Activated CD8-positive, alpha-beta memory T cell treated with anti-CD3 and anti-CD28 coated beads, Interleukin-2, amount 10 ng/mL, durations not matched to agents 7 days and 5 days (primary cell): ENCODE measurements at regions of chr1 and their contacts with region 1.

Region 1: GRCh38 chr1:224644553-224645154 is 28.5 kb downstream of the CNIH3 start:
- DNase-seq: peak; percentile 70
- ATAC-seq: peak; percentile 79
- H3K4me3 Mint-ChIP-seq: no peak overlapping the region
- H3K27ac Mint-ChIP-seq: no peak overlapping the region
- H3K4me1 Mint-ChIP-seq: peaks cover 7% of the 10 kb centered on the region
- H3K27me3 Mint-ChIP-seq: peaks cover 9% of the 10 kb centered on the region

Region 2: GRCh38 chr1:224427346-224427745 is 217.3 kb before region 1 on chr1:
- CTCF ChIA-PET with region 1: no interaction called
- DNase-seq: no peak
- ATAC-seq: no peak
- H3K4me3 Mint-ChIP-seq: no peak overlapping the region
- H3K27ac Mint-ChIP-seq: no peak overlapping the region
- H3K4me1 Mint-ChIP-seq: peaks cover 50% of the 10 kb centered on the region
- H3K27me3 Mint-ChIP-seq: no peaks in the 10 kb centered on the region

Region 3: DNA sequence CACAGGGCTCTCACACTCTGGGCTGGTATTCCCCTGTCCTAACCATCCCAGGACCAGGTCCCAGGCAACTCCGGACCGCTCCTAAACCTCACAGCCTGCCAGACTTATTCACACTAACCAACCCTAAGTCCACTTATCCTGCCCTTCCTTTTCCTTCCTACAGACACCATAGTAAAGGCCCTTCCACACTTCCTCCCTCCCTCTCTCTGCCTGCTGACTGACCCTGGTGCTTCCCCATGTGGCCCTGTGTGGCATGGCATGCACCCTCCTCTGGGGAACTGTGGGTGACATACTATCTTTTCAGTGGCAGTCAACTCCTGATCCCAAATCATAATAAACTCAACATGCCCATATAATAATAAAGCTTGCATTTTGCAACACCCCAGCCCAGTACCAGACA is 129.7 kb after region 1 on chr1:
- CTCF ChIA-PET with region 1: no interaction called
- DNase-seq: no peak
- ATAC-seq: peak; percentile 39
- H3K4me3 Mint-ChIP-seq: no peak overlapping the region
- H3K27ac Mint-ChIP-seq: no peak overlapping the region
- H3K4me1 Mint-ChIP-seq: no peaks in the 10 kb centered on the region
- H3K27me3 Mint-ChIP-seq: peaks cover 12% of the 10 kb centered on the region

Region 4: DNA sequence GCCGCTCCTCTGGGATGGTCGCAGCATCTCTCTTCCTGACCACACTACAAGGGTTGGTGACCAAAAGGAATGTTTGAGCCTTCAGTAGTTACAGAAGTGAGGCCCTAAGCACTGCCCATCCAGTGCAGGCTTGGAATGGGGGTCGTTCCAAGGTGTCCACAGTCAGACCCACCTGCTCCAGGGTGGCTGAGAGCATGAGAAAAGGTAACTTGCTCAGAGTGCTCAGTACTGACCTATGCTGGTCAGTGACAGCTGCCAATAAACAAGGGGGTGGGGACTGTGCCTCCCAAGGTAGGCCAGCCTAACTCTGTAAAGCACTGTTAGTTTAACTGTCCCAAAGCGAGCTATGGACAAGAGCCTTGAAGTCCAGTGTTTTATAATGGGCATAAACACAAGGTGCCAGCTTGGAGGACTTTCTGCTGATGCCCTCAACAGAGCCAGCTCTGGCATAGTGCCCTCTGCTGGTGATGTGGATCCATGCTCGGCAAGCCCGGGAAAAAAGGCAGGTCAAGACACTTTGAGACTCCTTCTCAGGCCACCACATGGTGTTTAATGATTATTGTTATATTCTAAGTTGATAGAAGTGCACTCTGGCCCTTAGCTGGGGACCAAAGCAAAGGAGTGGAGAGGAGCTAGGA is 206.7 kb after region 1 on chr1:
- CTCF ChIA-PET with region 1: interaction called, 15 read pairs
- DNase-seq: peak; percentile 66
- ATAC-seq: peak; percentile 57
- H3K4me3 Mint-ChIP-seq: no peak overlapping the region
- H3K27ac Mint-ChIP-seq: no peak overlapping the region
- H3K4me1 Mint-ChIP-seq: no peaks in the 10 kb centered on the region
- H3K27me3 Mint-ChIP-seq: peaks cover 10% of the 10 kb centered on the region